Endothelial cell of umbilical vein (primary cell): ENCODE measurements at regions of chr1 and their contacts with region 1.

Region 1: GRCh38 chr1:175319418-175320230 is 127.0 kb upstream of the KIAA0040 start:
- DNase-seq: peak; percentile 75
- H3K4me3 ChIP-seq: no peak overlapping the region
- H3K27ac ChIP-seq: no peak overlapping the region
- H3K4me1 ChIP-seq: peaks cover 12% of the 10 kb centered on the region
- H3K27me3 ChIP-seq: peaks cover 2 to 3% of the 10 kb centered on the region in 2 experiments
- CTCF ChIP-seq: peak; percentile 85 to 88
- POLR2A ChIP-seq: no peak

Region 2: DNA sequence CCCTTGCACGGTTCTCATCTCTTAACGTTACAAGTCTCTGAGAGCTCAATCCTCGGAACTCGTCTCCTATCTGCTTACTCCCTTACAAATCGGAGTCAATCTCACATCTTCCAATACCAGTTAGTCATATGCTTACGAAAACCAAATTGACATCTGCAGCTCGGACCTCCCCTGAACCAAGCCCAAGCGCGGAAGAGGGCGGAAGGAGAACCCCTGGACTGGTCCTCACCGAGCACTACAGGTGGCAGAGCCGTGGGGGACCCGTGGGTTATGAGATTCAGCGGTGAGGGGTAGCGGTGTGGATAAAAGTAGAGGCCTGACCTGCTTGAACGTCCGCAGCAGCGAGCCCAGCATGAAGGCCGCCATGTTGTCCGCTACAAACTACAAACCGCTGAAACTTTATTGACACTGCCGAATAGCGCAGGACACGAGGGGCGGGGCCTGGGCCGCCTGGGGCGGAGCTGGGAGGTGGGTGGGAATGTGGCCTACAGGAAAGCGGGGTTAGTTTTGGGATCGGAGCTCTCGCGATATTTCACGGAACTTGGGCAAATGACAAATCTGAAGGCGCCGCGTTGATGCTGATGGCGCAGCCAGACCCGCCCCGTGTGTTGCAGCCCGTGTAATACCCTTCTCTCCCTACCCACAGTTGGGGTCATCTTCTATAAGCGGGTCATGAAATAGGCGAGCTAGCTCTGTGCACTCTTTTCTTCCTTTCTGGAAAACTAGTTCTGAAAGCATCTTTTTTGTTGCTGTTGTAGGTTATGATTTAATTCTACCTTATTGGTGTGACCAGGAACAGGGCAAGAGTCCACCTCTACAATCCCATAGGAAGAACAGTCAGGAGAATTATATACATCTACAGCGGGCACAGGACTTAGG is 296.3 kb before region 1 on chr1 and contains the start of gene MRPS14:
- CTCF ChIA-PET with region 1: no interaction called
- POLR2A ChIA-PET with region 1: no interaction called
- dilution Hi-C with region 1: no loop called
- intact Hi-C with region 1: loop called (anchors 2 kb)
- DNase-seq: peak; percentile 98
- H3K4me3 ChIP-seq: peak within 1 kb of the TSS; percentile 83 to 98 (median 96)
- H3K27ac ChIP-seq: peak within 1 kb of the TSS; percentile 68
- H3K4me1 ChIP-seq: peaks cover 12% of the 10 kb centered on the region
- H3K27me3 ChIP-seq: no peaks in the 10 kb centered on the region
- CTCF ChIP-seq: no peak
- POLR2A ChIP-seq: peak; percentile 77
- total RNA-seq, gene MRPS14: 31.6 and 31.8 TPM in 2 replicates

Region 3: GRCh38 chr1:175146529-175147213 is 173.0 kb before region 1 on chr1:
- CTCF ChIA-PET with region 1: interaction called, 387 read pairs
- POLR2A ChIA-PET with region 1: no interaction called
- dilution Hi-C with region 1: loop called (anchors 10 kb)
- intact Hi-C with region 1: no loop called
- DNase-seq: peak; percentile 65
- H3K4me3 ChIP-seq: no peak overlapping the region
- H3K27ac ChIP-seq: no peak overlapping the region
- H3K4me1 ChIP-seq: no peaks in the 10 kb centered on the region
- H3K27me3 ChIP-seq: peaks cover 0 to 14% of the 10 kb centered on the region in 2 experiments
- CTCF ChIP-seq: peak; percentile 86 to 95
- POLR2A ChIP-seq: no peak

Region 4: GRCh38 chr1:175192630-175193526 is 126.7 kb before region 1 on chr1 and contains the start of gene KIAA0040:
- CTCF ChIA-PET with region 1: interaction called, 5 read pairs
- POLR2A ChIA-PET with region 1: no interaction called
- dilution Hi-C with region 1: no loop called
- intact Hi-C with region 1: loop called (anchors 1 kb)
- DNase-seq: peak; percentile 62
- H3K4me3 ChIP-seq: peak within 1 kb of the TSS; percentile 62 to 93 (median 87)
- H3K27ac ChIP-seq: peak within 1 kb of the TSS; percentile 75
- H3K4me1 ChIP-seq: peaks cover 20% of the 10 kb centered on the region
- H3K27me3 ChIP-seq: no peaks in the 10 kb centered on the region
- CTCF ChIP-seq: peak in 1 of 2 donors; percentile 24
- POLR2A ChIP-seq: no peak
- total RNA-seq, gene KIAA0040: 10.9 and 21.5 TPM in 2 replicates

Region 5: GRCh38 chr1:175221666-175222175 is 97.9 kb before region 1 on chr1:
- CTCF ChIA-PET with region 1: interaction called, 11 read pairs
- POLR2A ChIA-PET with region 1: no interaction called
- dilution Hi-C with region 1: no loop called
- intact Hi-C with region 1: loop called (anchors 2 kb)
- DNase-seq: peak; percentile 43
- H3K4me3 ChIP-seq: no peak overlapping the region
- H3K27ac ChIP-seq: no peak overlapping the region
- H3K4me1 ChIP-seq: peaks cover 7% of the 10 kb centered on the region
- H3K27me3 ChIP-seq: no peaks in the 10 kb centered on the region
- CTCF ChIP-seq: peak; percentile 7 to 12
- POLR2A ChIP-seq: no peak

Region 6: DNA sequence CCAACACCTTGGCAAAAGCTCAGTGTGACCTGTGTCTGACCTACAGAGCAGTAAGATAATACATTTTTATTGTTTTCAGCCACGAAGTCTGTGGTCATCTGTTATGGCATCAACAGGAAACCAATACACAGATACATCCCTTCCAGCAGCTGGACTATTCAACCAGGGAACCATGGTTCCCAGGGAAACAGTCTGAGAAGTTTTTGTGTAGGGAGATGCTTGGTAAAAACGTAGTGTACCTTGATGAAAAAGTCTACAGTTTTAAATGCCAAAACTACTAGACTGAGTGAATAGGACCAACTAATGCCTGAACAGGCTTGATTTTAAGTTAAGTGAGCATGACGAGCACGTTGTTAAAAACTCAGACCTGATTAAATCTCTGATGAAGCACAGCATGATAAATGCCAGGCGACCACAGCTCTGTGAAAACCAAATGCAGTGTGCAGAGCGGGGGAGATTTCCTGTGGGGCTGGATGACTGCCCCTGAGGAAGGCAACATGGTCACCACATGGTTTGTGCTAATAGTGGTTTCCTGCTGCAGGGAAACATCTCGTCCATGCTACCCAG is 194.8 kb after region 1 on chr1:
- CTCF ChIA-PET with region 1: no interaction called
- POLR2A ChIA-PET with region 1: no interaction called
- dilution Hi-C with region 1: no loop called
- intact Hi-C with region 1: loop called (anchors 5 kb)
- DNase-seq: peak; percentile 94
- H3K4me3 ChIP-seq: peak overlapping the region in 1 of 3 experiments; percentile 25
- H3K27ac ChIP-seq: peak overlapping the region; percentile 99
- H3K4me1 ChIP-seq: peaks cover 61% of the 10 kb centered on the region
- H3K27me3 ChIP-seq: no peaks in the 10 kb centered on the region
- CTCF ChIP-seq: no peak
- POLR2A ChIP-seq: peak; percentile 22